ENCODE measurements at regions of chr16 and their contacts with region 1.

Region 1: DNA sequence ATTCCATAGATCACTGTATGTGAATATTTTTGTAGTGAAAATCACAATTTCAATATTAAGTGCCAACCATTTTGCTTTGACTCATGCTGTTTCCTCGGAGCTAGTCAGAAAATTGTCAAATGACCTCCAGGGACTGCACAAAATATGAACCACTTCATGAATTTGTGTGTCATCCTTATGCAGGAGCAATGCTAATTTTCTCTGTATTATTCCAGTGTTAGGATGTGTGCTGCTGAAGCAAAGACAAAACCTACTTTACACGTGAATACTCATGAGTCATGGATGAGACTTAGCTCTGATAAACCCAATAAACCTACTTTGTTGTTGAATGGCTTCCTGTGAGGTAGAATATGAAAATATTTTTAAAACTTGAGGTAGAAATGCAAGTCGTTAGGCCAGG is 65.2 kb downstream of the SHCBP1 start:
- DNase-seq: no peak
- ATAC-seq: no peak
- H3K4me3 ChIP-seq: no peak overlapping the region
- H3K4me3 Mint-ChIP-seq: no peak overlapping the region
- H3K27ac ChIP-seq: no peak overlapping the region
- H3K27ac Mint-ChIP-seq: no peak overlapping the region
- H3K4me1 ChIP-seq: no peaks in the 10 kb centered on the region
- H3K4me1 Mint-ChIP-seq: peaks cover 6% of the 10 kb centered on the region
- H3K27me3 ChIP-seq: no peaks in the 10 kb centered on the region
- H3K27me3 Mint-ChIP-seq: peaks cover 17% of the 10 kb centered on the region
- CTCF ChIP-seq: no peak

Region 2: DNA sequence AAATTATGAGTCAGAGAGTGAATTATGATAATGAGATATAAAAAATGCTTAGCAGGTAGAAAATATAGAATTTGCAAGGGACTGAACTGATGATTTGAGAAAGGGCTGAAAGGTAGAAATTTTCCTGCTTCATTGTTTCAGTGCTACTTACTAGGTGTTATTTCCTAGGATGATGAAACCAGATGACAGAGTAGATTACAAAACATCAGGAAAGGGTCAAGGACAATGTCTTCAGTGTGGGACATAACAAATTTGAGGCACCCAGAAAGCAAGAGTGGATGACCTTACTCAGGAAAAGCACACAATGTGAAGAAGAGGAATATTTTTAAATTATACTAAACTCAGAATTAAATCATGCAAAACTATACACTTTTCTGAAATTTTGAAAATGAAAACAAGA is 36.9 kb before region 1 on chr16:
- CTCF ChIA-PET with region 1: no interaction called
- POLR2A ChIA-PET with region 1: no interaction called
- intact Hi-C with region 1: no loop called
- DNase-seq: no peak
- ATAC-seq: no peak
- H3K4me3 ChIP-seq: no peak overlapping the region
- H3K4me3 Mint-ChIP-seq: no peak overlapping the region
- H3K27ac ChIP-seq: no peak overlapping the region
- H3K27ac Mint-ChIP-seq: no peak overlapping the region
- H3K4me1 ChIP-seq: no peaks in the 10 kb centered on the region
- H3K4me1 Mint-ChIP-seq: no peaks in the 10 kb centered on the region
- H3K27me3 ChIP-seq: no peaks in the 10 kb centered on the region
- H3K27me3 Mint-ChIP-seq: no peaks in the 10 kb centered on the region
- CTCF ChIP-seq: no peak

Region 3: DNA sequence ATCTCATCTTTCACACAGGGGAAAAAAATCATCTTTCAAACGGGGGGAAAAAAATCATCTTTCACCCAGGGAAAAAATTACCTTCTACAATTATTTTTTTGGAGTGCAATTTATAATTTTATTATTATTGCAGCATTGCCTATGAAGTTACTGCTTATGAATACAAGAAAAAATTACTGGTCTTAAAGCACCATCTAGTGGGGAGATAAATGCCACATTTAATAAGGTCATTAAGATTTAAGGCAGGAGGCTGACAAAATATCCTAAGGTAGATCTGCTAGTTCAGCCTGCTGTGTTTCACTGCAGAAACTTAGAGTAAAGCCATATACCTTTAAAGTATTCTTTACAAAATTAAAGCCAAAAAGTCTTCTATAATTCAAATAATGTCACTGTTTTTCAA is 51.6 kb after region 1 on chr16:
- CTCF ChIA-PET with region 1: interaction called, 15 read pairs
- POLR2A ChIA-PET with region 1: no interaction called
- intact Hi-C with region 1: loop called (anchors 1 kb)
- DNase-seq: peak in 2 of 9 experiments; percentile 54 to 62
- ATAC-seq: no peak
- H3K4me3 ChIP-seq: no peak overlapping the region
- H3K4me3 Mint-ChIP-seq: no peak overlapping the region
- H3K27ac ChIP-seq: no peak overlapping the region
- H3K27ac Mint-ChIP-seq: no peak overlapping the region
- H3K4me1 ChIP-seq: no peaks in the 10 kb centered on the region
- H3K4me1 Mint-ChIP-seq: no peaks in the 10 kb centered on the region
- H3K27me3 ChIP-seq: no peaks in the 10 kb centered on the region
- H3K27me3 Mint-ChIP-seq: no peaks in the 10 kb centered on the region
- CTCF ChIP-seq: peak; percentile 51

Region 4: GRCh38 chr16:46673320-46674013 is 117.5 kb after region 1 on chr16:
- CTCF ChIA-PET with region 1: no interaction called
- POLR2A ChIA-PET with region 1: no interaction called
- intact Hi-C with region 1: no loop called
- DNase-seq: peak in 8 of 9 experiments; percentile 17 to 76 (median 48)
- ATAC-seq: peak; percentile 95
- H3K4me3 ChIP-seq: no peak overlapping the region
- H3K4me3 Mint-ChIP-seq: no peak overlapping the region
- H3K27ac ChIP-seq: no peak overlapping the region
- H3K27ac Mint-ChIP-seq: no peak overlapping the region
- H3K4me1 ChIP-seq: no peaks in the 10 kb centered on the region
- H3K4me1 Mint-ChIP-seq: peaks cover 2% of the 10 kb centered on the region
- H3K27me3 ChIP-seq: no peaks in the 10 kb centered on the region
- H3K27me3 Mint-ChIP-seq: no peaks in the 10 kb centered on the region
- CTCF ChIP-seq: peak; percentile 95

Region 5: GRCh38 chr16:46883690-46884512 is 327.9 kb after region 1 on chr16 and contains the start of gene GPT2:
- CTCF ChIA-PET with region 1: no interaction called
- POLR2A ChIA-PET with region 1: no interaction called
- intact Hi-C with region 1: no loop called
- DNase-seq: peak; percentile 27 to 77 (median 59)
- ATAC-seq: peak; percentile 91
- H3K4me3 ChIP-seq: peak within 1 kb of the TSS; percentile 59 to 70
- H3K4me3 Mint-ChIP-seq: peak within 1 kb of the TSS; percentile 92
- H3K27ac ChIP-seq: no peak within 1 kb of the TSS
- H3K27ac Mint-ChIP-seq: no peak within 1 kb of the TSS
- H3K4me1 ChIP-seq: no peaks in the 10 kb centered on the region
- H3K4me1 Mint-ChIP-seq: peaks cover 10% of the 10 kb centered on the region
- H3K27me3 ChIP-seq: no peaks in the 10 kb centered on the region
- H3K27me3 Mint-ChIP-seq: peaks cover 29% of the 10 kb centered on the region
- CTCF ChIP-seq: no peak
- total RNA-seq, gene GPT2: 0.08 TPM in 1 of 2 experiments, not detected in the other